Panc1 (cell line): ENCODE measurements at regions of chr4 and their contacts with region 1.

Region 1: DNA sequence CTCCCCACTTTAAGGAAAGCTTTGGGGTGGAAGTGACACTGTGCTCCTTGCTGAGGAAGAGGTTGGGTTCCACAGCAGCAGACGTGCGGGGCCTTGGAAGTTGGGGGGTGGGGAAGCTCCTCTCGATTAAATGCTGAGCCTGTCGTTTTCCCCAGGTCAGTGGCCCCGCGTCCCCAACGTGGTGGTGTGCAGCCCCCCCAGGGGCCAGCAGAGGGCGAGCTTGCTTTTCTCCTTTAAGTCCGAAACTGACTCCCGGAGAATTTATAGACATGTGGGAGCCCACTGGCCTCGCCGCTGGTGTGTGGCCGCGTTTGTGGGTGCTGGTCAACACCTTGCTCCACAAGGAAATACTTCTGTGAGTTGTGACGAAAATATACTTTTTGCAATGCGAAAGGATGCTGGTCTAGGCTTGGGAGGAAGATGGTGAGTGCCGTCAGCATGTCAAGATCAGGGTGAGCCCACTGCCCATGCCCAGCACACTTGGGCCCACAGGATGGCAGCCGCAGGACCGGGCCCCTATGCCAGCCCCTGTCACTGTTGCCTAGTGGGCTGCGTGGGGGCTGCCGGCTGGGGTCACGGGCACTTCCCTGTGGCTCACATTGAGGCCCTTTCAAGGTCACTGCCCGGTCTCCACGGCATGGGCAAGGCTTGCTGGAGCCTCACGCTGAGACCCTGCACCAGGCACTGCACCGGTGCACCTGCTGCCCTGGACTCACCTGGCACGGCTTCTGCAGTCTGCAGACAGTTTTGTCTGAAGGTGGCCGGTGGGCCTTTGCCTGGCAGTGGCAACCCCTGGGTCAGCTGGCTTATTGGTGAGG is 9.4 kb downstream of the UVSSA start:
- DNase-seq: no peak
- ATAC-seq: 0 out of 2 replicates have a peak, but pooled peaks have one; percentile 33
- H3K4me3 ChIP-seq: no peak overlapping the region
- H3K27ac ChIP-seq: no peak overlapping the region
- H3K4me1 ChIP-seq: no peaks in the 10 kb centered on the region
- H3K27me3 ChIP-seq: no peaks in the 10 kb centered on the region
- CTCF ChIP-seq: peak; percentile 86

Region 2: GRCh38 chr4:1512738-1513660 is 156.6 kb after region 1 on chr4:
- CTCF ChIA-PET with region 1: no interaction called
- POLR2A ChIA-PET with region 1: no interaction called
- in situ Hi-C with region 1: no loop called
- intact Hi-C with region 1: loop called (anchors 5 kb)
- DNase-seq: no peak
- ATAC-seq: peak; percentile 95
- H3K4me3 ChIP-seq: peak overlapping the region in 1 of 2 experiments; percentile 9; a peak in 2 of 4 replicates
- H3K27ac ChIP-seq: no peak overlapping the region
- H3K4me1 ChIP-seq: no peaks in the 10 kb centered on the region
- H3K27me3 ChIP-seq: no peaks in the 10 kb centered on the region
- CTCF ChIP-seq: peak; percentile 91

Region 3: GRCh38 chr4:1628892-1629698 is 272.7 kb after region 1 on chr4:
- CTCF ChIA-PET with region 1: interaction called, 5 read pairs
- POLR2A ChIA-PET with region 1: no interaction called
- in situ Hi-C with region 1: no loop called
- intact Hi-C with region 1: loop called (anchors 5 kb)
- DNase-seq: peak; percentile 5
- ATAC-seq: peak; percentile 93
- H3K4me3 ChIP-seq: no peak overlapping the region
- H3K27ac ChIP-seq: no peak overlapping the region
- H3K4me1 ChIP-seq: no peaks in the 10 kb centered on the region
- H3K27me3 ChIP-seq: no peaks in the 10 kb centered on the region
- CTCF ChIP-seq: peak; percentile 94

Region 4: DNA sequence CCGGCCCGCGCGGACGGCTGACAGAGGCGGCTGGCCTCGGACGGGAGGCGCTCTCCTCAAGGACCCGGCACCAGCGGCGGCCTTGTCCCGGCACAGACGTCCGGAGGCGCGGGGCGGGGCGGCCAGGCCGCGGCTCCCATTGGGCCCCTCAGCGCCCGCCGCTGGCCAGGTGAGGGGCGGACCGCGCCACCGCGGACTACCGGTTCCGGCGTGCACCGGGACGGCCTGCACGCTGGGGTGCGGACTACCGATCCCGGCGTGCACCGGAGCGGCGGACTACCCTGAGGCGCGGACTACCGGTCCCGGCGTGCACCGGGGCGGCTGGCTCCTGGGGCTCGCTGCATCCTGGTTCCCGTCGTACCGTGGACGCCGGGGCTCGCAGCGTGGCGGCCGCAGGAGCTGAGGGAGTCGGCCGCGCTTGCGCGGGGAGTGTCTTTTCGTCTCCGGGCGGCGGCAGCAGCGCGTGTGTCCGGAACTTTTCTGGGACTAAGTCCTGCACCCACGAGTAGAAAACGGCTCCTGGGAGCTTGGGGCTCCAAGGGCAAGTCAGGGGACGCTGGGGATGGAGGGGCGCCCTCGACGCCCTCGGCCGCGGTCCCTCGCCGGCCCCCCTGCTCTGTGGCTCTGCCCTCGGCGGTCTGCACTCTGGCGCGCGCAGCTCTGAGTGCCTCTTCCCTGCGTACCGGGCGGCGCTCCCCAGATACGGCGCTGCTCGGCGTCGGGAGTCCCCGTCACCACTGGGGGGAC is 499.8 kb after region 1 on chr4 and contains the start of gene LETM1:
- CTCF ChIA-PET with region 1: no interaction called
- POLR2A ChIA-PET with region 1: no interaction called
- in situ Hi-C with region 1: no loop called
- intact Hi-C with region 1: no loop called
- DNase-seq: no peak
- ATAC-seq: peak; percentile 96
- H3K4me3 ChIP-seq: peak within 1 kb of the TSS; percentile 75 to 78
- H3K27ac ChIP-seq: peak within 1 kb of the TSS; percentile 83
- H3K4me1 ChIP-seq: peaks cover 15% of the 10 kb centered on the region
- H3K27me3 ChIP-seq: no peaks in the 10 kb centered on the region
- CTCF ChIP-seq: no peak
- total RNA-seq, gene LETM1: 67.6 TPM